Cardiac septum (tissue), 1 donor: ENCODE measurements at regions of chrX and their contacts with region 1.

Region 1: DNA sequence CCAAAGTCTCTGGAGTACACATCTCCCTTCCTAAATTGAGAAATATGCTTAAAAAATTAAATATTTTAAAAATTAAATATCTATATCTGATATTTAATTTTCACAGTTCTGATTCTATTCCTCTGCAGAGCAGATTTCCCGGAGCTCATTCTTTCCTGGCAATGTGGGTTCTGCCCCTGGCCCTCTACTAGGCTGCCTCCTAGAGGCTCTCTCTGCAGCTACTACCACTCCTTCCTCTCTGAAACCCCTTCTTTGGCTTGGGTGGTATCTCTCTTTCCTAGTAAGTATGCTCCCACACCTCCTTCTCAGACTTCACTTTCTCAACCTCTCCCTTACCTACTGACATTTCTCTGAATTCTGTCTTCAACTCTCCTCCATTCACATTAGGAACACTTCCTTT is 45.3 kb downstream of the RPGR start:
- DNase-seq: no peak

Region 2: GRCh38 chrX:38192007-38192810 is 89.8 kb before region 1 on chrX:
- intact Hi-C with region 1: loop called (anchors 10 kb)
- DNase-seq: no peak

Region 3: DNA sequence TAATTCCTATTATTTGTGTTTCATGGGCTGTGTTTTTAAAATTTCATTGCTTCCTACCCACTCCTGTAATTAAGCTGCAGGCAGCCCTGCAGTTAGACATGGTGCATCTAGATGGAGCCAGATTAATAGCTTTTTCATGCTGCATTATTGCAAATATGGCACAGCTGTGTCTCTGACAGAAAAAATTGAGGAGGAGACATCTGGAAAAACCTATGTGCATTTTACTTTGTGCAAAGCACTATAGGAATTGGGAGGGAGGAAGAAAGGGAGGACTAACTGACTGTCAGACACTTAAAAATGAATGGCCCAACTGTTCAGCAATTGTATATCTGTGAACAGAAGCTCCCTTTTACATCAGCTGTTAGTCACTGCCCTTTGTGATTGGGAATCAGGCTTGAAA is 53.3 kb after region 1 on chrX:
- intact Hi-C with region 1: no loop called
- DNase-seq: no peak